ENCODE measurements at regions of chr21 and their contacts with region 1.

Region 1: DNA sequence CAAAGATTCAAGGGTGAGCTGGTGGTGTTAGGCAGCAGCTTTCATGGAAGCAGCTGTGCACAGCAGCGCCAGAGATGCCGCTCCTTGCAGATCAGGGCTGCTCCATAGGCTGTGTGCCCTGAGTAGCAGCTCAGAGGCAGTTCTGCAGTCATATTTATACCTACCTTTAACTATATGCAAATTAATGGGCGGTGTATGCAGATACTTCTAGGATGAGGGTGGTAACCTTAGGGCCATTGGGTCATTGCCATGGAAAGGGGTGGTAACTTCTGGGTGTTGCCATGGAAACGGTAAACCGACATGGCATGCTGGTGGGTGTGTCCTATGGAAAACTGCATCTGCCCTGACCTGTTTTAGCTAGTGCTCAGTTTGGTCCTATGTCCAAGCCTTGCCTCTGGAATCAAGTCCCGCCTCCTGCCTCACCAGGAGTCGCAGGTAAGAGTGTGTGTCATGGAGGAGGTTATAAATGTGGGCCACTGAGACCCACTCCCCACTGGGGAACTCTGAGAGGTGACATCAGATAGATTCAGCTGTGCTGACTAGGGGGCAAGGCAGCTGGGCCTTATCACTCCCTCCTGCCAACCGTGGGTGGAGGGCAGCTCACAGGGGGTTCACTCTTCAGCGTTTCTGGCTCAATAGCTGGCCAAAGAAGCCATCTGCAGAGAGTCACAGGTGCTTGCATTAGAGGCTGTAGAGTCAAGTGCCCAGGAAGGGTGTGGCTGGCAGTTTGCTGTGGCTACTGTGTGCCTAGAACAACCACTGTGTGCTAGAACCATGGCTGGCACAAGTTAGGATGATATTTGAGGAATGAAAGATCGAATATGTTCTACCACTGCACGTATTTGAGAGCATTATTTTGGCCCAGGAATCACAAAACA is 18.9 kb downstream of the BACE2 start:
- DNase-seq: no peak
- H3K4me3 ChIP-seq: no peak overlapping the region
- H3K27ac ChIP-seq: no peak overlapping the region
- H3K4me1 ChIP-seq: no peaks in the 10 kb centered on the region
- H3K27me3 ChIP-seq: no peaks in the 10 kb centered on the region
- CTCF ChIP-seq: no peak
- EP300 ChIP-seq: no peak
- POLR2A ChIP-seq: no peak

Region 2: DNA sequence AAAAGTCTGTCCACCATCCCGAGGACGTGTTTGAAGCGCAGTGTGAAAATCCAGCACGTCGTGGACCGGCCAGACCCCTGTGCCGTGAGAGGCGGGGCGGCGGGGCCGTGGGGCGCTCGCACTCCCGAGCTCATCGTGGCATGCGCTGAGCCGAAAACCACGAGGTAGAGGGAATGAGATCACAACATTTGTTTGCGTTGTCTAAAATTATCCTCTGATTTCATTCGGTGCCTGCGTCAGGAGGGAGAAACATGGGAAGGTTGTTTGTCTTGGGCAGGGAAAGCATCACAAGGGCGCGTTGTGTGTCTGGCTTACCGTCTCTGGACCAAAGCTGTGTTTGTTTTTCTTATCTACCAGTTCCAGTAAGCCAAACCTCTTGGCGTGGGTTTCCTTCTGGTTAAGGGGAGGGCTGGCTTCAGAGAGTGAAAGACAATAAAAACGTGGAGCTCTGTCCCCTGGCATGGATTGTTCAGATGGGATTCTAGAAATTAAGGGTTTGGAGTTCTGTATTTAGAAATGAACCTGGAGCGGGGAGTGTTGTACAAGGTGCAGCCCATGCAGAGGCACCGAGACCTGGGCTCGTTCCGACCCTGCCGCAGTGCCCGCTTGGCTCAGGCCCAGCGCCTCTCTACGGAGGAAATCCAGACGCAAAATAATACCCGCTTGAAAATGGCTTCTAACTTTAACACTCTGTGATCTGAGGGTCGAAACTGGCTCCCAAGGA is 60.8 kb after region 1 on chr21:
- intact Hi-C with region 1: loop called in 1 of 4 experiments (anchors 10 kb)
- DNase-seq: peak in 1 of 5 donors; percentile 34
- H3K4me3 ChIP-seq: no peak overlapping the region
- H3K27ac ChIP-seq: no peak overlapping the region
- H3K4me1 ChIP-seq: peaks cover 3% of the 10 kb centered on the region
- H3K27me3 ChIP-seq: no peaks in the 10 kb centered on the region
- CTCF ChIP-seq: no peak
- EP300 ChIP-seq: no peak
- POLR2A ChIP-seq: no peak

Measured in ovary (tissue), 10 donors.